CD8-positive, alpha-beta T cell (primary cell): ENCODE measurements at regions of chr4 and their contacts with region 1.

Region 1: DNA sequence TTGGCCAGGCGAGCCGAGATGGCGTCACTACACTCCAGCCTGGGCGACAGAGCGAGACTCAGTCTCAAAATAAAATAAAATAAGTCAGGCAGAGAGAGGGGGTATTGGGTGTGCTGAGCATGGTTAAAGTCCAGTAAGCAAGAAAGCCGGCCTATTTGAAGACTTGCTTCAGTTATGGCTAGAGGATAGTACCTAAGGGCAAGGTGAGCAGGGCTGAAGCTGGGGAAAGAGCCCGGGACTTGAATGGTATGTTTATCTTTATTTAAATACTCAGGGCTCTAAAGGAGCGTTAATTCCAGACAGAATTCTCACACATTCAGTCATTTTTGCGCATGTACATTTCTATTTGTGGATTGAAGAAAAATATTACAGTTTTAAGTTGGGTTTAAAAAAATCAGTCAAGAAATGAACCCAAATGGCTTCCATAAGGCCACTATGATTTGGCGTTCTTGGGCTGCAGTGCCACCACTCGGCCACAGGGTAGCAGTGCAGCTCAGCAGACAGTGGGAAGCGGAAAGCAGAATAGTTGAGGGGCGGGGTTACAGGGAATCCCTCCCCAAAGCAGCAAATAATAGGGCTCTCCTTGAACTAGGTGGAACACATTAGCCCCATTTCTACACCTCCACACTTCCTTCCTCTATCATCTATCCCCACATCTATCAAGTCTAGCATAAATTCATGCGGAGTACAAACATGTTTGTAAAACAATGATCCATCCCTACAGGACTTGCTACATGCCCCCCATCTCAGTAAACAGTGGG is 37.2 kb upstream of the SH3D19 start:
- DNase-seq: peak; percentile 50 to 83 (median 72)
- ATAC-seq: peak; percentile 100
- H3K4me3 ChIP-seq: no peak overlapping the region
- H3K4me3 Mint-ChIP-seq: no peak overlapping the region
- H3K27ac ChIP-seq: no peak overlapping the region
- H3K27ac Mint-ChIP-seq: no peak overlapping the region
- H3K4me1 ChIP-seq: no peaks in the 10 kb centered on the region
- H3K4me1 Mint-ChIP-seq: peaks cover 4% of the 10 kb centered on the region
- H3K27me3 ChIP-seq: no peaks in the 10 kb centered on the region
- H3K27me3 Mint-ChIP-seq: peaks cover 4% of the 10 kb centered on the region
- CTCF ChIP-seq: peak; percentile 83

Region 2: GRCh38 chr4:149980941-149981340 is 1381.6 kb before region 1 on chr4:
- CTCF ChIA-PET with region 1: no interaction called
- POLR2A ChIA-PET with region 1: no interaction called
- intact Hi-C with region 1: loop called (anchors 5 kb)
- DNase-seq: peak in 6 of 9 experiments; percentile 11 to 58 (median 41)
- ATAC-seq: peak; percentile 31
- H3K4me3 ChIP-seq: no peak overlapping the region
- H3K4me3 Mint-ChIP-seq: no peak overlapping the region
- H3K27ac ChIP-seq: no peak overlapping the region
- H3K27ac Mint-ChIP-seq: no peak overlapping the region
- H3K4me1 ChIP-seq: no peaks in the 10 kb centered on the region
- H3K4me1 Mint-ChIP-seq: no peaks in the 10 kb centered on the region
- H3K27me3 ChIP-seq: no peaks in the 10 kb centered on the region
- H3K27me3 Mint-ChIP-seq: no peaks in the 10 kb centered on the region
- CTCF ChIP-seq: peak; percentile 73

Region 3: DNA sequence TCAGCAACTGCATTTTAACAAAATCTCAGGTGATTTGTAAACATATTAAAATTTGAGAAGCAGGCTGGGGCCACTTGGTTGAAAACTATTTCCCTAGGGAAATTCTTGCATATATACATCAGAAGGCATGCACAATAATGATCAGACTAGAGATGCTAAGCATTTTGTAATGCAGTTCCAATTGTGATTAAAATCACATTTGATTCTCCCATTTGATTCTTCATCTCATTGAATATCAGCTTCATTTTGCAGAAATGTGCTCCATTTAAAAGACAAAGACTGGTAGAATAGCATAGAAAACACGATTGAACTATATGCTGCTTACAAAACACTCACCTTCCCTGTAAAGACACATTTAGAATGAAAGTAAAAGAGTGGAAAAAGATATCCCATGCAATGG is 14.0 kb after region 1 on chr4:
- CTCF ChIA-PET with region 1: no interaction called
- POLR2A ChIA-PET with region 1: no interaction called
- intact Hi-C with region 1: no loop called
- DNase-seq: no peak
- ATAC-seq: no peak
- H3K4me3 ChIP-seq: no peak overlapping the region
- H3K4me3 Mint-ChIP-seq: no peak overlapping the region
- H3K27ac ChIP-seq: no peak overlapping the region
- H3K27ac Mint-ChIP-seq: no peak overlapping the region
- H3K4me1 ChIP-seq: no peaks in the 10 kb centered on the region
- H3K4me1 Mint-ChIP-seq: no peaks in the 10 kb centered on the region
- H3K27me3 ChIP-seq: no peaks in the 10 kb centered on the region
- H3K27me3 Mint-ChIP-seq: peaks cover 24% of the 10 kb centered on the region
- CTCF ChIP-seq: no peak

Region 4: GRCh38 chr4:151408630-151409469 is 46.3 kb after region 1 on chr4 and contains the start of gene FHIP1A:
- CTCF ChIA-PET with region 1: no interaction called
- POLR2A ChIA-PET with region 1: no interaction called
- intact Hi-C with region 1: loop called in 1 of 2 experiments (anchors 2 kb)
- DNase-seq: peak; percentile 60 to 87 (median 82)
- ATAC-seq: peak; percentile 96
- H3K4me3 ChIP-seq: peak within 1 kb of the TSS; percentile 60 to 66
- H3K4me3 Mint-ChIP-seq: peak within 1 kb of the TSS; percentile 93
- H3K27ac ChIP-seq: peak within 1 kb of the TSS in 1 of 2 experiments; percentile 24
- H3K27ac Mint-ChIP-seq: peak within 1 kb of the TSS; percentile 67
- H3K4me1 ChIP-seq: peaks cover 17% of the 10 kb centered on the region
- H3K4me1 Mint-ChIP-seq: peaks cover 25% of the 10 kb centered on the region
- H3K27me3 ChIP-seq: no peaks in the 10 kb centered on the region
- H3K27me3 Mint-ChIP-seq: peaks cover 18% of the 10 kb centered on the region
- CTCF ChIP-seq: no peak
- total RNA-seq, gene FHIP1A: 1.5 to 2.1 TPM

Region 5: GRCh38 chr4:151744614-151745013 is 382.0 kb after region 1 on chr4:
- CTCF ChIA-PET with region 1: no interaction called
- POLR2A ChIA-PET with region 1: no interaction called
- intact Hi-C with region 1: no loop called
- DNase-seq: no peak
- ATAC-seq: no peak
- H3K4me3 ChIP-seq: no peak overlapping the region
- H3K4me3 Mint-ChIP-seq: no peak overlapping the region
- H3K27ac ChIP-seq: no peak overlapping the region
- H3K27ac Mint-ChIP-seq: no peak overlapping the region
- H3K4me1 ChIP-seq: no peaks in the 10 kb centered on the region
- H3K4me1 Mint-ChIP-seq: peaks cover 2% of the 10 kb centered on the region
- H3K27me3 ChIP-seq: no peaks in the 10 kb centered on the region
- H3K27me3 Mint-ChIP-seq: no peaks in the 10 kb centered on the region
- CTCF ChIP-seq: no peak

Region 6: DNA sequence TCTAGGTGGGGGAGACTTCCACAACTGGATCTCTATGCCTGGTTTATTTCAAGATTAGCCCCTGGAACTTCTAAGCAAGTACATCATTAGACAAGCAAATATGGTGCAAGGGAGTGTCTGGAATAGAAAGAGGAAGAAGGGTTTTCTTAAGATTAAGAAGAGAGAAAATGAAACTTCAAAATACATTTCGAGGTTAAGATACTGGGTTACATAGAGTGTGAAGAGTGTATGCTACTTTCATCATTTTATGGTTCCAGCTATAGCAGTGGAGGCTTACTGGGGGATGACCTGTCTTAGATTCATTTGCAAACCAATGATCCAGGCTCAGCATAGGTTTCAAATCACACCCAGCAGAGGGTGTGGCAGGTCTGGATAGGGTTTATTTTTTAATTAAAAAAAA is 542.6 kb after region 1 on chr4:
- CTCF ChIA-PET with region 1: no interaction called
- POLR2A ChIA-PET with region 1: no interaction called
- intact Hi-C with region 1: no loop called
- DNase-seq: no peak
- ATAC-seq: no peak
- H3K4me3 ChIP-seq: no peak overlapping the region
- H3K4me3 Mint-ChIP-seq: no peak overlapping the region
- H3K27ac ChIP-seq: no peak overlapping the region
- H3K27ac Mint-ChIP-seq: no peak overlapping the region
- H3K4me1 ChIP-seq: no peaks in the 10 kb centered on the region
- H3K4me1 Mint-ChIP-seq: no peaks in the 10 kb centered on the region
- H3K27me3 ChIP-seq: no peaks in the 10 kb centered on the region
- H3K27me3 Mint-ChIP-seq: peaks cover 3% of the 10 kb centered on the region
- CTCF ChIP-seq: no peak

Region 7: DNA sequence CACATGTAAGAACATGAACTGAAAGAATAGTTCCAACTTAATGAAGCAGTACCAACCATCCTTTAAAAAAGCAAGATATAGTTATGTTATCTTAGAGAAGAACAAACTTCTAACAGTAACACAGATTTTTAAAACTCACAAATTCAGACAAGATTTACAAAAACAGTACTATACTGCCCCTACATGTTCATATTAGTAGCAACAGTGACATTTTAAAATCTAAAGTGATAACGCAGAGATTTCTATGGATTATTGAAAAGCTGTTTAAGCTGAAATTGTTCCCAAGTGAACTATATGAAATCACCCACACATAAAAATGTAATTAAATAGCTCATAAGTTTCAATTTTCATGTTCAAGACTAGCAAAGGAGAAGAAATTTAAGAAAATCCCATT is 1007.3 kb after region 1 on chr4:
- CTCF ChIA-PET with region 1: no interaction called
- POLR2A ChIA-PET with region 1: no interaction called
- intact Hi-C with region 1: loop called in 1 of 2 experiments (anchors 1 kb)
- DNase-seq: peak in 1 of 9 experiments; percentile 26
- ATAC-seq: no peak
- H3K4me3 ChIP-seq: no peak overlapping the region
- H3K4me3 Mint-ChIP-seq: no peak overlapping the region
- H3K27ac ChIP-seq: no peak overlapping the region
- H3K27ac Mint-ChIP-seq: no peak overlapping the region
- H3K4me1 ChIP-seq: no peaks in the 10 kb centered on the region
- H3K4me1 Mint-ChIP-seq: peaks cover 13% of the 10 kb centered on the region
- H3K27me3 ChIP-seq: no peaks in the 10 kb centered on the region
- H3K27me3 Mint-ChIP-seq: no peaks in the 10 kb centered on the region
- CTCF ChIP-seq: peak; percentile 53

Region 8: GRCh38 chr4:152640058-152640833 is 1277.7 kb after region 1 on chr4:
- CTCF ChIA-PET with region 1: no interaction called
- POLR2A ChIA-PET with region 1: no interaction called
- intact Hi-C with region 1: loop called (anchors 2 kb)
- DNase-seq: peak in 2 of 9 experiments; percentile 24 to 43
- ATAC-seq: peak; percentile 38
- H3K4me3 ChIP-seq: no peak overlapping the region
- H3K4me3 Mint-ChIP-seq: no peak overlapping the region
- H3K27ac ChIP-seq: no peak overlapping the region
- H3K27ac Mint-ChIP-seq: no peak overlapping the region
- H3K4me1 ChIP-seq: no peaks in the 10 kb centered on the region
- H3K4me1 Mint-ChIP-seq: peaks cover 11% of the 10 kb centered on the region
- H3K27me3 ChIP-seq: no peaks in the 10 kb centered on the region
- H3K27me3 Mint-ChIP-seq: no peaks in the 10 kb centered on the region
- CTCF ChIP-seq: peak; percentile 85